ENCODE measurements at regions of chr5 and their contacts with region 1.

Region 1: GRCh38 chr5:154087257-154087656 is 48.5 kb downstream of the MFAP3 start:
- DNase-seq: no peak
- H3K4me3 ChIP-seq: no peak overlapping the region
- H3K27ac ChIP-seq: no peak overlapping the region
- H3K4me1 ChIP-seq: peaks cover 0 to 7% (median 0%) of the 10 kb centered on the region in 4 donors
- H3K27me3 ChIP-seq: no peaks in the 10 kb centered on the region
- CTCF ChIP-seq: no peak
- EP300 ChIP-seq: no peak
- POLR2A ChIP-seq: no peak

Region 2: GRCh38 chr5:154174091-154174490 is 86.8 kb after region 1 on chr5:
- in situ Hi-C with region 1: loop called in 2 of 4 experiments (anchors 5 to 10 kb)
- intact Hi-C with region 1: no loop called
- DNase-seq: no peak
- H3K4me3 ChIP-seq: no peak overlapping the region
- H3K27ac ChIP-seq: no peak overlapping the region
- H3K4me1 ChIP-seq: peaks cover 0 to 5% (median 0%) of the 10 kb centered on the region in 4 donors
- H3K27me3 ChIP-seq: no peaks in the 10 kb centered on the region
- CTCF ChIP-seq: no peak
- EP300 ChIP-seq: no peak
- POLR2A ChIP-seq: no peak

Region 3: DNA sequence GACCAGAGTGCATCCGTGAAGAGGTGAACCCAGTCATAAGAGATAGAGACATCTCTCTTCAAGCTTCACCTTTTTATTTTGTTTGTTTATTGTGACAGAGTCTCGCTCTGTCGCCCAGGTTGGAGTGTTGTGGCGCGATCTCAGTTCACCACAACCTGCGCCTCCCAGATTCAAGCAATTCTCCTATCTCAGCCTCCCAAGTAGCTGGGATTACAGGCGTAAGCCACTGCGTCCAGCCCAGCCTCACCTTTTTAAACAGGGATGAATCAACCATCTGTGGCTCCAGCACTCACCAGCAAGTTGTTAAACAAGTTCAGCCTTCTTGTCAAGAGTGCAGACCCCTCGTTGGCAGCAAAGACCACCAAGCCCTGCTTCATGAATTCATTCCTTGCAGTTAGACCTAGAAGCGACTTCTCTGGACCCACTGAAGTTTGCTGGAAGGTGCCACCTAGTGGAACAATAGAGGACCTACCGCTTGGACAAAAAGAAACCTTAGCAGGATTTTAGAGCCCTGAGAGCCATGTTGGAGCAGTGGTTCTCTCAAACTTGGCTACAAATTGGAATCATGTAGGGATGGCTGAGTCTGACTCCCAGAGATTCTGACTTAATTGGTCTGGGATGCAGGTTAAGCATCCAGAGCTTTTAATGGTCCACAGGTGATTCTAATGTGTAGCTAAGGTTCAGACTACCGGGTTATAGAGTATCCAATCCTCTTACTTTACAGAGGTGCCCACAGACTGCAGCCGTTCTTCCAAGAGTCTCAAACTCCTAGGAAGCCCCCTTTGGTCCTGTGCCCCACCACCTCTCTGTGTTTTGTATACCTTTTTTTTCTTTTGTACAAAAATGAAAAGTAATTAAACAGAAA is 92.8 kb after region 1 on chr5:
- in situ Hi-C with region 1: loop called in 2 of 4 experiments (anchors 10 kb)
- intact Hi-C with region 1: no loop called
- DNase-seq: no peak
- H3K4me3 ChIP-seq: no peak overlapping the region
- H3K27ac ChIP-seq: peak overlapping the region in 2 of 4 donors; percentile 30 to 62
- H3K4me1 ChIP-seq: peaks cover 0 to 14% (median 3%) of the 10 kb centered on the region in 4 donors
- H3K27me3 ChIP-seq: no peaks in the 10 kb centered on the region
- CTCF ChIP-seq: peak; percentile 68 to 79 (median 75)
- EP300 ChIP-seq: no peak
- POLR2A ChIP-seq: no peak

Region 4: DNA sequence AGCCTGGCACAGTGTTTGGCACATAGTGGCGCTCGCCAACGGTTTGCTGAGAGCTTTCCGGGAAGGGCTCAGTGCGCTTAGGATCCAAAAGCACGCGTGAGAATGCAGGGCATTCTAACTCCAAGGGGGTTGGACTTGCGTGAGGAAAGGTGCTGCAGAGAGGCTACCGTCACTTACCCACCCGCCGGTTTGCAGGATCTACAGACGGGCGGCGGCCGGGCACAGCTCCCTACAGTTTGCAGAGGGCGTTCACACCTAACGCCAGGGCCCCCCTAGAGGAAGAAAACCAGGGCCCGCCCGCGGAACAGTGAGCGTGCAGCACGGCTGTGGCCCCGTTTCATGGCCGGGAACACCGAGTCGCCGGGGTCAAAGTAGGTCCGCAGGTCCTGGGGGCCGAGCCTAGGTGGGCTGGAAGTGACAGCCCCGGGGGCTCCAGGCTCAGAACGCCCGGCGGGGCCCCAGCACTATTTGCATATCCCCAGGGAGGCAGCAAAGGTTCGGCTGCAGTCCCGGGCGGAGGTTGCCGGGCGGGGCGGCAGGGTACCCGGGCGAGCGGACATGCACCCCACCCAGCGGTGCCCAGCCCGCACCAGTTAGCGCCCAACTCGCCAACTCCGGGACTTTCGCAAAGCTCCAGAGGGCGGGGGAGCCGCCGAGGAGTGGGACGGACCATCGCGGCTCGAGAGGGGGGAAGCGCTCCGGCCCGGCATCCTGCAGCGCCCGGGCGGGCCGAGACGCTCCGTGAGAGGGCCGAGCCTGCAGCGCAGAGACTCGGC is 102.8 kb after region 1 on chr5:
- in situ Hi-C with region 1: loop called in 1 of 4 experiments (anchors 10 kb)
- intact Hi-C with region 1: no loop called
- DNase-seq: peak; percentile 90
- H3K4me3 ChIP-seq: peak overlapping the region; percentile 59 to 82 (median 72)
- H3K27ac ChIP-seq: peak overlapping the region; percentile 85 to 96 (median 90)
- H3K4me1 ChIP-seq: peaks cover 6 to 39% (median 22%) of the 10 kb centered on the region in 4 donors
- H3K27me3 ChIP-seq: no peaks in the 10 kb centered on the region
- CTCF ChIP-seq: peak; percentile 33 to 79 (median 49)
- EP300 ChIP-seq: no peak
- POLR2A ChIP-seq: peak; percentile 50

Measured in transverse colon (tissue), 4 donors.